H1 (cell line): ENCODE measurements at regions of chrX and their contacts with region 1.

Region 1: DNA sequence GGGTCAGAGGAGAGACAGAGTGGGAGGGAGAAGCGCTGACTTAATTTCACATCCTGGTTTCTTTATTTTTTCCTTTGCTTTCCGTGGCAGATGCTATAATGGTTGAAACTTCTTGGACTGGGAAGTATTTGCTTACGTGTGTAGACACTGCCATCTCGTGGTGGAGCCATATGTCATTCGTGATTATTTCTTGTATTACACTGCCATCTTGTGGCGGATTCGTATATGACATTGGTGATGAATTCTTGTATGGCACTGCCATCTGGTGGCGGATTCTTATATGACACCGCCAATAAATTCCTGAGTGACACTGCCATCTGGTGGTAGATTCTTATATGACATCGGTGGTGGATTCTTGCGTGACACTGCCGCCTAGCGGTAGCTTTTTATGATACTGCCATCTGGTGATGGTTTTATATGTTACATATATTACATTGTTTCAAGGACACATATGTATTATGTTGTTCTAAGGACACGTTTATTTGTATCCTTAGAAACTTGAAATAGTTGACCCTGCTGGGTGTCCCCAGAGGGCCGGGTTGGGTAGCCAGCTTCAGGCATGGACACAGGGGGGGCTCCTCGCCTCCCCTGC is 37.3 kb upstream of the CLCN4 start:
- DNase-seq: peak; percentile 5 to 60
- H3K4me3 ChIP-seq: no peak overlapping the region
- H3K27ac ChIP-seq: no peak overlapping the region
- H3K4me1 ChIP-seq: no peaks in the 10 kb centered on the region
- H3K27me3 ChIP-seq: no peaks in the 10 kb centered on the region
- CTCF ChIP-seq: peak; percentile 42 to 100 (median 99)
- EP300 ChIP-seq: peak in 1 of 2 experiments; percentile 36; a peak in 1 of 3 replicates
- POLR2A ChIP-seq: no peak
- RAD21 ChIP-seq: peak; percentile 97 to 98

Region 2: GRCh38 chrX:9873952-9874351 is 245.5 kb before region 1 on chrX:
- CTCF ChIA-PET with region 1: interaction called, 11 read pairs
- POLR2A ChIA-PET with region 1: no interaction called
- DNase-seq: peak in 1 of 2 experiments; percentile 50
- H3K4me3 ChIP-seq: no peak overlapping the region
- H3K27ac ChIP-seq: no peak overlapping the region
- H3K4me1 ChIP-seq: peaks cover 0 to 7% (median 0%) of the 10 kb centered on the region in 4 experiments; a peak in 2 of 7 replicates
- H3K27me3 ChIP-seq: no peaks in the 10 kb centered on the region
- CTCF ChIP-seq: peak; percentile 45 to 56 (median 56)
- EP300 ChIP-seq: no peak
- POLR2A ChIP-seq: no peak
- RAD21 ChIP-seq: peak; percentile 42 to 53

Region 3: GRCh38 chrX:9955506-9955905 is 164.0 kb before region 1 on chrX:
- CTCF ChIA-PET with region 1: interaction called, 13 read pairs
- POLR2A ChIA-PET with region 1: no interaction called
- DNase-seq: no peak
- H3K4me3 ChIP-seq: no peak overlapping the region
- H3K27ac ChIP-seq: no peak overlapping the region
- H3K4me1 ChIP-seq: no peaks in the 10 kb centered on the region
- H3K27me3 ChIP-seq: no peaks in the 10 kb centered on the region
- CTCF ChIP-seq: no peak
- EP300 ChIP-seq: no peak
- POLR2A ChIP-seq: no peak
- RAD21 ChIP-seq: no peak

Region 4: DNA sequence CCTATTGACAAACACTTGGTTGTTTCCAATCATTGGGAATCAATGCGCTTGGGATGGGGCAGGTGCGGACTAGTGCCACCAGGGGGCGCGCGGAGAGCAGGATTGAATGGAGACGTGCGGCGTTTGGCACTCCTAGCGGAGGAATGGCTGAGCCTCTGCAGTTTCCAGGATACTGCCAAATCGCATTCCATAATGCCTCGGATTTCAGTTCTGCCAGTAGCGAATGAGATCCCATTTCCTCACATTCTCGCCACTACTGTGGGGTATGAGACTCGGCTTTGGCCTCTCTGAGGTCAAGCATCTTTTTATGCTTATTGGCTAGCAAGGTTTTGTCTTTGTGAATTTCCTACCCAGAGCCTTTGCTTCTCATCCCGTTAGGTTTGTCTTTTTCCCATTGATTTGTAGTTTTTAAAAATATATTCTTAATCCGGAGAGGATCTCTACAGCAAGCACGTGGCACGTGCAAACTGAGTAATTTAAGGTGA is 123.6 kb before region 1 on chrX:
- CTCF ChIA-PET with region 1: interaction called, 66 read pairs
- POLR2A ChIA-PET with region 1: no interaction called
- DNase-seq: peak; percentile 47 to 89
- H3K4me3 ChIP-seq: no peak overlapping the region
- H3K27ac ChIP-seq: no peak overlapping the region
- H3K4me1 ChIP-seq: no peaks in the 10 kb centered on the region
- H3K27me3 ChIP-seq: no peaks in the 10 kb centered on the region
- CTCF ChIP-seq: peak; percentile 80 to 100 (median 82)
- EP300 ChIP-seq: no peak
- POLR2A ChIP-seq: no peak
- RAD21 ChIP-seq: peak; percentile 90 to 95

Region 5: GRCh38 chrX:10007621-10008020 is 111.9 kb before region 1 on chrX:
- CTCF ChIA-PET with region 1: interaction called, 15 read pairs
- POLR2A ChIA-PET with region 1: no interaction called
- DNase-seq: no peak
- H3K4me3 ChIP-seq: no peak overlapping the region
- H3K27ac ChIP-seq: no peak overlapping the region
- H3K4me1 ChIP-seq: peaks cover 0 to 19% (median 6%) of the 10 kb centered on the region in 4 experiments; a peak in 4 of 7 replicates
- H3K27me3 ChIP-seq: no peaks in the 10 kb centered on the region
- CTCF ChIP-seq: no peak
- EP300 ChIP-seq: no peak
- POLR2A ChIP-seq: no peak
- RAD21 ChIP-seq: no peak